Mammary epithelial cell (primary cell): ENCODE measurements at regions of chr19 and their contacts with region 1.

Region 1: GRCh38 chr19:43651758-43652545 is 12.3 kb upstream of the CADM4 start:
- DNase-seq: no peak
- H3K4me3 ChIP-seq: no peak overlapping the region
- H3K27ac ChIP-seq: no peak overlapping the region
- H3K4me1 ChIP-seq: no peaks in the 10 kb centered on the region
- H3K27me3 ChIP-seq: no peaks in the 10 kb centered on the region
- CTCF ChIP-seq: peak; percentile 71 to 90

Region 2: GRCh38 chr19:43489310-43489709 is 162.6 kb before region 1 on chr19:
- CTCF ChIA-PET with region 1: no interaction called
- dilution Hi-C with region 1: no loop called
- in situ Hi-C with region 1: no loop called
- intact Hi-C with region 1: no loop called
- DNase-seq: no peak
- H3K4me3 ChIP-seq: no peak overlapping the region
- H3K27ac ChIP-seq: no peak overlapping the region
- H3K4me1 ChIP-seq: no peaks in the 10 kb centered on the region
- H3K27me3 ChIP-seq: no peaks in the 10 kb centered on the region
- CTCF ChIP-seq: no peak

Region 3: DNA sequence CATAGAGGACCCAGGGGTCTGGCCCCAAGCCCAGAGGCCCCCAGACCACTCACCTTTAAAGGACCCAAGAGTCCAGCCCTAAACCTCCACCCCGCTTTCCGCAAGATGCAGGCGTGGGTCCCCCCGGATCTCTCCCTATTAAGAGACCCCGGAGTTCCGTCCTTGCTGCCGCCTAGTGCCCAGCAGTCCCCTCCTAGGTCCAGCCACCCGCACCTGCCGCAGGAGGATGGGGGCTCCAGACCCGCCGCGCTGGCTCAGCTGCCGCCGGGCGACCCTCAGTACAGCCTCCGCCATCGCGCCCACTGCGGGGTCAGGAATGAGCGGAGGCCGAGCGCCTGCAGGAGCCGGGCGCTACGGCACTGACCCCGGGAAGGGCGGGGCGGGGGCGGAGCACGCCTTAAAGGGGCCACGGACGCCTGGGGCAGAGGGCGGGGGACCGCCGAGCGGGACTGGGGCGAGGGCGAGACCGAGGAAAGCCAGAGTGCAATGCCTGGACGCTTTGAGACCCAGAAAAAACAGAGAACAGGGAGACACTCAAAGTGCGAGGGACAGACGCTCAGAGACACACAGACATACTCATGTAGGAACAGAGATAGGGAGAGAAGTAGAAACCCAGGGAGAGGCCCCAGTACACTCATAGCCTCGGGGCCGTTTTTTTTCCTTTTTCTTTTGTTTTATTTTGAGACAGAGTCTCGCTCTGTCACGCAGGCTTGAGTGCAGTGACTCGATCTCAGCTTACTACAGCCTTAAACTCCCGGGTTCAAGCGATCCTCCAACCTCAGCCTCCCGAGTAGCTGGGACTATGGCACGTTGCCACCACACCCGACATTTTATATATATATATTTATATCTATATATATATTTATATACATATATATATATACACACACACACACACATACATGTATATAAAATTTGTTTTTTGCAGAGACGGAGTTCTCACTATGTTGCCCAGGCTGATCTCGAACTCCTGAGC is 124.8 kb before region 1 on chr19 and contains the start of gene ETHE1:
- CTCF ChIA-PET with region 1: no interaction called
- dilution Hi-C with region 1: no loop called
- in situ Hi-C with region 1: no loop called
- intact Hi-C with region 1: loop called (anchors 2 kb)
- DNase-seq: peak; percentile 78
- H3K4me3 ChIP-seq: peak within 1 kb of the TSS; percentile 75 to 90 (median 90)
- H3K27ac ChIP-seq: peak within 1 kb of the TSS; percentile 71
- H3K4me1 ChIP-seq: peaks cover 37% of the 10 kb centered on the region
- H3K27me3 ChIP-seq: no peaks in the 10 kb centered on the region
- CTCF ChIP-seq: no peak
- total RNA-seq, gene ETHE1: 114 to 122 TPM

Region 4: GRCh38 chr19:43555185-43555770 is 96.7 kb before region 1 on chr19:
- CTCF ChIA-PET with region 1: no interaction called
- dilution Hi-C with region 1: no loop called
- in situ Hi-C with region 1: no loop called
- intact Hi-C with region 1: loop called (anchors 1 kb)
- DNase-seq: peak; percentile 53
- H3K4me3 ChIP-seq: no peak overlapping the region
- H3K27ac ChIP-seq: no peak overlapping the region
- H3K4me1 ChIP-seq: no peaks in the 10 kb centered on the region
- H3K27me3 ChIP-seq: no peaks in the 10 kb centered on the region
- CTCF ChIP-seq: peak; percentile 84 to 95

Region 5: GRCh38 chr19:43700395-43701000 is 48.5 kb after region 1 on chr19:
- CTCF ChIA-PET with region 1: no interaction called
- dilution Hi-C with region 1: no loop called
- in situ Hi-C with region 1: no loop called
- intact Hi-C with region 1: no loop called
- DNase-seq: peak; percentile 23
- H3K4me3 ChIP-seq: no peak overlapping the region
- H3K27ac ChIP-seq: no peak overlapping the region
- H3K4me1 ChIP-seq: peaks cover 8% of the 10 kb centered on the region
- H3K27me3 ChIP-seq: no peaks in the 10 kb centered on the region
- CTCF ChIP-seq: no peak